Heart left ventricle (tissue), 16 donors: ENCODE measurements at regions of chr5 and their contacts with region 1.

Region 1: DNA sequence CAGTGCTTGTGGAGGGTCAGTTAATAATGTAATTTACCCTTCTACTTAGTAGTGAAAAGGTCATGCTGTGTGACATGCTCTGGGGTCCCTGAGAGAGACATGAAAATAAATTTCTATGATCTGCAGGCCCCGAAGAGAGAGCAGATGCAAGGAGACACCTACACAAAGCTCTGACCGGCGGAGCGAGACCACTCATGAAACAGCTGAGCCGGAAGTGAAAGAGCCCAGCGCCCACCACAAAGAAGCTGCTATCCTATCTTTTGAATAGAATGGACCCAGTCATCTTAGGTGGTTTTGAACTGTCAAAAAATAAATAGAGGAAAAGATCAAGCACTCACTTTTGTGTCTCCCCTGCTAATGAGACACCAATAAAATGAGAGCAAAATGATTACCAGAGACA is 190.0 kb downstream of the MED10 start:
- DNase-seq: no peak
- ATAC-seq: no peak
- H3K4me3 ChIP-seq: no peak overlapping the region
- H3K27ac ChIP-seq: no peak overlapping the region
- H3K4me1 ChIP-seq: no peaks in the 10 kb centered on the region
- H3K27me3 ChIP-seq: no peaks in the 10 kb centered on the region
- CTCF ChIP-seq: no peak
- POLR2A ChIP-seq: no peak

Region 2: DNA sequence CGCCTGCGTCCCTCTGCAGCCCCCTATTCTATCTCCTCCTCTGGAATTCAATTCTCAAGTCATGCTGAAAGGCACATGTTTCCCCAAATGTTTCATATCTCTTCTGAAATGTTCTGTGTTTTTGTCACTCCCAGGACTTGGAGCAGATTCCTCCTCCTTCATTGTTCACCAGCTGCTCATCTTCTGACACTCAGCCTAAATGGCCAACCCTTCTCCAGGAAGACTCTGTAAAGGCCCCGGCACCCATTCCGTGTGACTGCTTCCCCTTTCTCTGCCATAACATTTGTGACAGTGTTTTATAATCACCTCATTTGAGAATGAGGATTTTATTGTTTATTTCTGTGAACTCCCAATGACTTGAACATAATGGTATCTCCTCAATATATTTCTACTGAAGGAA is 1219.0 kb before region 1 on chr5:
- intact Hi-C with region 1: loop called in 1 of 10 experiments (anchors 10 kb)
- DNase-seq: no peak
- ATAC-seq: no peak
- H3K4me3 ChIP-seq: no peak overlapping the region
- H3K27ac ChIP-seq: no peak overlapping the region
- H3K4me1 ChIP-seq: no peaks in the 10 kb centered on the region
- H3K27me3 ChIP-seq: no peaks in the 10 kb centered on the region
- CTCF ChIP-seq: no peak
- POLR2A ChIP-seq: no peak